Activated T-helper 1 cell treated with anti-CD3 and anti-CD28 coated beads, Interleukin-12 subunit alpha, Interleukin-12 subunit beta, Interleukin-2, Interleukin-4 antibody, amounts not matched to agents 30 ng/mL and 10 ng/mL and 1 ng/mL, durations not matched to agents 14 hours and 24 hours and 36 hours (primary cell): ENCODE measurements at regions of chr4 and their contacts with region 1.

Region 1: GRCh38 chr4:60296386-60296785 is 903.7 kb upstream of the ADGRL3 start:
- DNase-seq: no peak
- H3K4me3 Mint-ChIP-seq: no peak overlapping the region
- H3K27ac Mint-ChIP-seq: no peak overlapping the region
- H3K4me1 Mint-ChIP-seq: no peaks in the 10 kb centered on the region
- H3K27me3 Mint-ChIP-seq: no peaks in the 10 kb centered on the region

Region 2: DNA sequence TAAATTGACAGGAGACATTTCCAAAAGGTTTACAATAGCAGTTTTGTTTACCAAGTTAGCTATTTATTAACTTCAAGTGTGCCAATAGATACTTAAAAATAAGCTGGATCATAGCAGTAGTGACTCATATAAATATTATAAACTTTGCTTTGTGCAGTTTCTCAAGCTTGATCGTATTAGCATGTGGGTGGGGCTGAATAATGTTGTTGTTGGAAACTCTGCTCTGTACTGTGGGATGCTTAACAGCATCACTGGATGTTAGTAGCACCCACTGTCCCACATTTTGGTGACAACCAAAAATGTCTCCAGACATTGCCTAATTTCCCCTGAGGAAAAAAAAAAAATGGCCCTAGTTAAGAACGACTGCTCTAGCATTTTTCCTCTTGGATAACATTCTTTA is 48.5 kb after region 1 on chr4:
- intact Hi-C with region 1: loop called (anchors 5 kb)
- DNase-seq: no peak
- H3K4me3 Mint-ChIP-seq: no peak overlapping the region
- H3K27ac Mint-ChIP-seq: no peak overlapping the region
- H3K4me1 Mint-ChIP-seq: no peaks in the 10 kb centered on the region
- H3K27me3 Mint-ChIP-seq: no peaks in the 10 kb centered on the region